WTC11 (cell line): ENCODE measurements at regions of chr2 and their contacts with region 1.

Region 1: DNA sequence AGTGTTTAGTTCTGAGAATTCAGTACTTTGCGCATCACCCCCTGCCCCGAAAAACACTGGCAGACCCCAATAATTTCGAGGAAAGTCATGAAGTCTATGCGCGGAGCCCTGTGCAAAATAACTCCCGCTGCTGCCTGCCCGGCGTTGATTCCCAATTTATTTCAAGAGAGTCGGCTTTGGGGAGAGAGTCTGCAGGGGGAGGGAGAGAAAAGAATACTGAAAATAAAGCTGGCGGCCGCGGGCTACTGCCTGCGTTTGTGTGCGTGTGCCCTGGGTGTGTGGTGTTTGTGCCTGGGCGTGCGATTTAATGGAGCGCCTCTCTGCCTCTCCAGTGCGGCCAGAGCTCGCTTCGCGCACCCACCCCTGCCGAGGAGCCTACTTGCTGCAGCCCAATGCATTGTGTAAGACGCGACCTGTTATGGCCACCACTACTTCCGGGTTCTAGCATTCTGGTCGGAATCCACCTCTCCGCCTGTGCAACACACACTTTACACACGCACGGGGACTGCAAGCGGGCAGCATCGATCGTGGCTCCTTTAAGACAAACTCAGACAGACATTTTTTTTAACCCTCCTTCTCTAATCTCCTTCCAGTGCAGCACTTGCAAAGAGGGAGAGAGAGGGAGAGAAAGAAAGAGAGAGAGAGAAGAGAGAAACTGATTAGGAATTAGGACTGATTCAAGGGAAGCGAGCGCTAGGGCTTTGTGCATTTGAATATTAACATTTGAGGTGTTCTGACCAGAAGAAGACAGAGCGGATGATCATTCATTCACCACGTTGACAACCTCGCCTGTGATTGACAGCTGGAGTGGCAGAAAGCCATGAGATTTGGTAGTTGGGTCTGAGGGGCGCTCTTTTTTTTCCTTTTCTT is at the start of gene MEIS1:
- DNase-seq: peak; percentile 78
- ATAC-seq: peak; percentile 34
- H3K4me3 Mint-ChIP-seq: peak within 1 kb of the TSS; percentile 97
- H3K27ac Mint-ChIP-seq: no peak within 1 kb of the TSS
- H3K4me1 Mint-ChIP-seq: peaks cover 58% of the 10 kb centered on the region
- H3K27me3 Mint-ChIP-seq: peaks cover 100% of the 10 kb centered on the region
- CTCF ChIP-seq: no peak
- total RNA-seq, gene MEIS1: 0.30 to 0.48 TPM (median 0.39 TPM) in 3 replicates

Region 2: DNA sequence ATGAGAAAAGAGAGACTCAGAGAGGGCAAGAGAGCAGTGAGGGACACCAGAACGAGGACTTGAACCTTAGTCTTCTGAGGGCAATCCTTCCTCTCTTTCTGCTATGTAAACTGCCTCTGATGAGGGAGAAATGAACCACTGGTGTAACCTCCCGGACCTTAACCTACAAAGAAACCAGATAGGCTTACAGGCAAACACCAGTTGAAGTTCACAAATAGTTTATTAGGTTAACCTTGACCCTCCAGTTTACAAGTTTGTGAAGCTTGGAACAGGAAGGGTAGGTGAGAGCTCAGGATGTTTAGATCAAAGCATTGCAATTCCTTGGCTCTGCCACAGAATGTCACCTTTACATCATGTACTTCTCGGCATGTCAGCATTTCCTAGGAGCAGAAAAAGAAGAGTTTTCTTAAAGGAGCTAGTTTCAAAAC is 516.1 kb before region 1 on chr2:
- CTCF ChIA-PET with region 1: interaction called, 12 read pairs
- POLR2A ChIA-PET with region 1: no interaction called
- DNase-seq: no peak
- ATAC-seq: no peak; the same call in none of the 2 replicates
- H3K4me3 Mint-ChIP-seq: no peak overlapping the region
- H3K27ac Mint-ChIP-seq: no peak overlapping the region
- H3K4me1 Mint-ChIP-seq: peaks cover 8% of the 10 kb centered on the region
- H3K27me3 Mint-ChIP-seq: no peaks in the 10 kb centered on the region
- CTCF ChIP-seq: no peak

Region 3: GRCh38 chr2:66408905-66409304 is 26.0 kb before region 1 on chr2:
- CTCF ChIA-PET with region 1: no interaction called
- POLR2A ChIA-PET with region 1: no interaction called
- DNase-seq: no peak
- ATAC-seq: no peak
- H3K4me3 Mint-ChIP-seq: no peak overlapping the region
- H3K27ac Mint-ChIP-seq: no peak overlapping the region
- H3K4me1 Mint-ChIP-seq: peaks cover 9% of the 10 kb centered on the region
- H3K27me3 Mint-ChIP-seq: no peaks in the 10 kb centered on the region
- CTCF ChIP-seq: no peak

Region 4: DNA sequence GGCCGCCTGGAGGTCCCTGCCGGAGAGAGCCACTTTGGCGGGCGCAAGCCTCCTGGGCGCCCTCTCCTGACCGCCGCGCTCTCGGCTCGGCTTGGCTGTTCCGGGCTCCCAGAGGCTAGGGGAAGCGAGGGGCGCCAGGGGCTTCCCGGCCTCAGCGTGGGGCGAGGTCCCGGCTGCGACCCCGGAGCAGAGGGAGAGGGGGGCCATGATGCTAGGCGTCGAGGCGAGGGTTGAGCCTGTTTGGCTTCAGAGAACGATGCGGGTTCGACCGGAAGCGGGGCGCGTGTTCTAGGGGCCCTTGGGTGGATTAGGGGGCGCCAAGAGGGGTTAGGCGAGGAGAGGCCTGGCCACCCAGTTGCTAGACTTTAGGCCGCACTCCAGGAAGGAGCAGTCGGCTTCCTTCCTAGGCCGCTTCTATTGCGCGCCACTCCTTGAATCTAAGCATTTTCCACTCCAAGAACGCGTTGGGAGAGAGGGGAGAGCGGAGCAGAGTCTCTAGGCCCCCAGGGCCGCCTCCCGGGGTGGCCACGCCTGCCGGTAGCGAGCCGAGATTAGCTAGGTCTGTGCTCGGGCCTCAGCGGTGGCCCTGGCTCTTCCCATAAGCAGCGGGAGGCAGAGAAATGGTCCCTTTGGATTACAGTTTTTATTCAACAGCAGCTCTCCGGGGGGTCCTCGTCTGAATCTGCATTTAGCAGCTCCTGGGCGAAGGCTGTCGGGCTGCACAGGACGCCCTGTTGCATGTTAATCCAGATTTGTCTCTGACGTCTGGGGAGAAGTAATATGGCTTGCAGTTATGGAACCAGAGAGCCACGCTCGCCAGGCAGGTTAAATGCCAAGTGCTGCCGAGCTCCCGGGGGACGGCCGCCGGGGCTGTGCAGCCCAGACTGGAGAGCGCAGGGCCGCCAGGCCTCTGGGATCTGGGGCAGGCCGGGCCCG is 11.3 kb after region 1 on chr2:
- CTCF ChIA-PET with region 1: interaction called, 37 read pairs
- POLR2A ChIA-PET with region 1: interaction called, 4 read pairs
- DNase-seq: peak; percentile 62
- ATAC-seq: peak; percentile 74
- H3K4me3 Mint-ChIP-seq: peak overlapping the region; percentile 68
- H3K27ac Mint-ChIP-seq: no peak overlapping the region
- H3K4me1 Mint-ChIP-seq: peaks cover 37% of the 10 kb centered on the region
- H3K27me3 Mint-ChIP-seq: peaks cover 73% of the 10 kb centered on the region
- CTCF ChIP-seq: no peak